ENCODE measurements at regions of chr10 and their contacts with region 1.

Region 1: GRCh38 chr10:88932539-88933256 is 19.9 kb downstream of the ACTA2 start:
- DNase-seq: peak; percentile 57
- ATAC-seq: peak; percentile 86
- H3K4me3 Mint-ChIP-seq: no peak overlapping the region
- H3K27ac Mint-ChIP-seq: peak overlapping the region; percentile 38
- H3K4me1 Mint-ChIP-seq: peaks cover 25% of the 10 kb centered on the region
- H3K27me3 Mint-ChIP-seq: no peaks in the 10 kb centered on the region
- CTCF ChIP-seq: peak; percentile 74

Region 2: GRCh38 chr10:88565072-88565471 is 367.6 kb before region 1 on chr10:
- CTCF ChIA-PET with region 1: interaction called, 12 read pairs
- POLR2A ChIA-PET with region 1: no interaction called
- intact Hi-C with region 1: no loop called
- DNase-seq: no peak
- ATAC-seq: no peak
- H3K4me3 Mint-ChIP-seq: no peak overlapping the region
- H3K27ac Mint-ChIP-seq: no peak overlapping the region
- H3K4me1 Mint-ChIP-seq: peaks cover 3% of the 10 kb centered on the region
- H3K27me3 Mint-ChIP-seq: no peaks in the 10 kb centered on the region
- CTCF ChIP-seq: peak; percentile 53

Region 3: GRCh38 chr10:88828310-88828709 is 104.4 kb before region 1 on chr10:
- CTCF ChIA-PET with region 1: interaction called, 432 read pairs
- POLR2A ChIA-PET with region 1: interaction called, 5 read pairs
- intact Hi-C with region 1: no loop called
- DNase-seq: peak; percentile 20
- ATAC-seq: no peak
- H3K4me3 Mint-ChIP-seq: no peak overlapping the region
- H3K27ac Mint-ChIP-seq: no peak overlapping the region
- H3K4me1 Mint-ChIP-seq: peaks cover 62% of the 10 kb centered on the region
- H3K27me3 Mint-ChIP-seq: no peaks in the 10 kb centered on the region
- CTCF ChIP-seq: no peak

Region 4: DNA sequence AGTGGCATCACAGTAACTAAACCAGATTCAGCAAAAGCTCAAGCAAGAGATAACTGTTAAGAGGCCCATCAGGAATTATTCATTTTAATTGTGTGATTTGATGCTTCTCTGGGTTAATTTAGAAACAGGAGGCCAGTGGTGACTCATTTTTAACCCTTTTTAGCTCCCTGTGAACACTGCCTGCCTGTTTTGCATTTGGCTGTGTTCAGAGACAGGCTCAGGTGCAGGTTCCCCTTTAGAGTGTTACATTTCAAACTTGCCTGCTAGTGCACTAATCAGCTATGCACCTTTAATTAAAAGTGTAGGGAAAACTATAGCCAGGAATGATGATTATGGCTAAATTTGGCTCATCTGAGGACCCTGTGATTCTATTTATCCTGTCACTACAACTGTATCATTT is 46.1 kb before region 1 on chr10:
- CTCF ChIA-PET with region 1: interaction called, 18 read pairs
- POLR2A ChIA-PET with region 1: no interaction called
- intact Hi-C with region 1: no loop called
- DNase-seq: peak; percentile 44
- ATAC-seq: peak; percentile 90
- H3K4me3 Mint-ChIP-seq: no peak overlapping the region
- H3K27ac Mint-ChIP-seq: peak overlapping the region; percentile 5
- H3K4me1 Mint-ChIP-seq: peaks cover 81% of the 10 kb centered on the region
- H3K27me3 Mint-ChIP-seq: no peaks in the 10 kb centered on the region
- CTCF ChIP-seq: no peak

Region 5: GRCh38 chr10:88983206-88983605 is 50.5 kb after region 1 on chr10:
- CTCF ChIA-PET with region 1: interaction called, 19 read pairs
- POLR2A ChIA-PET with region 1: no interaction called
- intact Hi-C with region 1: loop called (anchors 10 kb)
- DNase-seq: no peak
- ATAC-seq: no peak
- H3K4me3 Mint-ChIP-seq: no peak overlapping the region
- H3K27ac Mint-ChIP-seq: no peak overlapping the region
- H3K4me1 Mint-ChIP-seq: peaks cover 26% of the 10 kb centered on the region
- H3K27me3 Mint-ChIP-seq: no peaks in the 10 kb centered on the region
- CTCF ChIP-seq: no peak

Region 6: DNA sequence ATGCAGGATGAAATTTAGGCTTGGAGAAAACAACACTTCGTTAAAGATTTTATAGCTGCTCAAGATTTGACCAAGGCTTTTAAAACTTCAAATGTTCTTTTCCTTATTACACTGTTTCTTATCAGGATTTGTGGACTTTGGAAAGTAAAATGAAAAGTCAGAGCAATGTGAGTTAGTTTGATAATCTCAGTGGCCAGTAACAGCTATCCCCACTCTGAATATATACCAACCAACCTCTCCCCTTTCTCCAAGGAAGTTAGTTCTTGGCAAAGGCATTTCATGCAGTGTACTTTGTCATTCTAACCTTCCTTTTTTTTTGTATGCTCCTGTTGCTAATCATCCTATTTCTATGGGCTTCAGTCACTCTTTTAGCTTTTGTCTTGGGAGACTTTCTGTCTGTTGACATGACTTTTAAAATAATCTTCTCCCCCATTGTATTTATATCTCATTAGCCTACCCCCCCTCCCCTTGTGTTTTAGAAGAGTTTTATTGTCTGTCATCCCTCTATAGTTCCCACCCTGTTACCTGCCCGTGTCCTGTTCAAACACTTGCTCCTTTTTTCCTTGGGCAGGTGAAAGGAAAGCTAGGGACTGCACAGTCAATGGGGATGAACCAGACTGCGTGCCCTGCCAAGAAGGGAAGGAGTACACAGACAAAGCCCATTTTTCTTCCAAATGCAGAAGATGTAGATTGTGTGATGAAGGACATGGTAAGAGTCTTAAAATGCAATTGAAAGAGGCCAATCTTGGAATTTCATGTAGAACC is 74.6 kb after region 1 on chr10:
- CTCF ChIA-PET with region 1: interaction called, 24 read pairs
- POLR2A ChIA-PET with region 1: interaction called, 4 read pairs
- intact Hi-C with region 1: loop called (anchors 5 kb)
- DNase-seq: no peak
- ATAC-seq: no peak
- H3K4me3 Mint-ChIP-seq: no peak overlapping the region
- H3K27ac Mint-ChIP-seq: no peak overlapping the region
- H3K4me1 Mint-ChIP-seq: peaks cover 16% of the 10 kb centered on the region
- H3K27me3 Mint-ChIP-seq: no peaks in the 10 kb centered on the region
- CTCF ChIP-seq: no peak

Region 7: GRCh38 chr10:89062861-89063260 is 130.2 kb after region 1 on chr10:
- CTCF ChIA-PET with region 1: no interaction called
- POLR2A ChIA-PET with region 1: no interaction called
- intact Hi-C with region 1: no loop called
- DNase-seq: no peak
- ATAC-seq: no peak
- H3K4me3 Mint-ChIP-seq: no peak overlapping the region
- H3K27ac Mint-ChIP-seq: no peak overlapping the region
- H3K4me1 Mint-ChIP-seq: no peaks in the 10 kb centered on the region
- H3K27me3 Mint-ChIP-seq: peaks cover 7% of the 10 kb centered on the region
- CTCF ChIP-seq: no peak

Region 8: GRCh38 chr10:89171263-89171872 is 238.7 kb after region 1 on chr10:
- CTCF ChIA-PET with region 1: no interaction called
- POLR2A ChIA-PET with region 1: no interaction called
- intact Hi-C with region 1: no loop called
- DNase-seq: no peak
- ATAC-seq: no peak
- H3K4me3 Mint-ChIP-seq: no peak overlapping the region
- H3K27ac Mint-ChIP-seq: no peak overlapping the region
- H3K4me1 Mint-ChIP-seq: peaks cover 3% of the 10 kb centered on the region
- H3K27me3 Mint-ChIP-seq: peaks cover 27% of the 10 kb centered on the region
- CTCF ChIP-seq: no peak

Region 9: GRCh38 chr10:89207181-89207800 is 274.6 kb after region 1 on chr10 and contains the start of gene CH25H:
- CTCF ChIA-PET with region 1: interaction called, 60 read pairs
- POLR2A ChIA-PET with region 1: no interaction called
- intact Hi-C with region 1: no loop called
- DNase-seq: peak; percentile 68
- ATAC-seq: peak; percentile 65
- H3K4me3 Mint-ChIP-seq: peak within 1 kb of the TSS; percentile 69
- H3K27ac Mint-ChIP-seq: no peak within 1 kb of the TSS
- H3K4me1 Mint-ChIP-seq: peaks cover 10% of the 10 kb centered on the region
- H3K27me3 Mint-ChIP-seq: peaks cover 33% of the 10 kb centered on the region
- CTCF ChIP-seq: no peak
- total RNA-seq, gene CH25H: not detected

Measured in activated CD8-positive, alpha-beta T cell treated with anti-CD3 and anti-CD28 coated beads for 36 hours (primary cell).